ENCODE measurements at regions of chr3 and their contacts with region 1.

Region 1: DNA sequence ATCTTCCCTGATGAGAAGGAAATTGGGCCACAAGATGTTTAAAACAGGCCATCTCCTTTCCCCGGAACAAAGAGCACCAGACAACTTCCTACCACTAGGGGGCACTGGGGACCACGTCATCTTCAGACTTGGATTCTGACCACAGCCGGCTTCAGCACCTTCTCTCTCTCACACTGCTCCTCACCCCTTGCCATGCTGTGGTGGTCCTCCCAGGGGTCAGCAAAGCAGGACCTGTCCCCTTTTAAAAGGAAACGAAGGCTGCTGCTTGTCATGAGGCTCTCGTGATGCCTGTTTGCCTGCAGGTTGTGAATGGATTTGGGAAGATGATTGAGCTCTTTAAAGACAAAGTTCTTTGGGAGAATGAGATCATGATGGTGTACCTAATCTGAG is 16.2 kb downstream of the RFT1 start:
- DNase-seq: peak; percentile 84
- CTCF ChIP-seq: peak; percentile 89

Region 2: GRCh38 chr3:53102601-53103147 is 11.3 kb before region 1 on chr3:
- CTCF ChIA-PET with region 1: interaction called, 25 read pairs
- POLR2A ChIA-PET with region 1: no interaction called
- DNase-seq: peak; percentile 79
- CTCF ChIP-seq: no peak

Region 3: GRCh38 chr3:53166781-53167291 is 52.8 kb after region 1 on chr3:
- CTCF ChIA-PET with region 1: interaction called, 10 read pairs
- POLR2A ChIA-PET with region 1: no interaction called
- DNase-seq: no peak
- CTCF ChIP-seq: no peak

Measured in GM10248 (cell line).